ENCODE measurements at regions of chrX and their contacts with region 1.

Region 1: DNA sequence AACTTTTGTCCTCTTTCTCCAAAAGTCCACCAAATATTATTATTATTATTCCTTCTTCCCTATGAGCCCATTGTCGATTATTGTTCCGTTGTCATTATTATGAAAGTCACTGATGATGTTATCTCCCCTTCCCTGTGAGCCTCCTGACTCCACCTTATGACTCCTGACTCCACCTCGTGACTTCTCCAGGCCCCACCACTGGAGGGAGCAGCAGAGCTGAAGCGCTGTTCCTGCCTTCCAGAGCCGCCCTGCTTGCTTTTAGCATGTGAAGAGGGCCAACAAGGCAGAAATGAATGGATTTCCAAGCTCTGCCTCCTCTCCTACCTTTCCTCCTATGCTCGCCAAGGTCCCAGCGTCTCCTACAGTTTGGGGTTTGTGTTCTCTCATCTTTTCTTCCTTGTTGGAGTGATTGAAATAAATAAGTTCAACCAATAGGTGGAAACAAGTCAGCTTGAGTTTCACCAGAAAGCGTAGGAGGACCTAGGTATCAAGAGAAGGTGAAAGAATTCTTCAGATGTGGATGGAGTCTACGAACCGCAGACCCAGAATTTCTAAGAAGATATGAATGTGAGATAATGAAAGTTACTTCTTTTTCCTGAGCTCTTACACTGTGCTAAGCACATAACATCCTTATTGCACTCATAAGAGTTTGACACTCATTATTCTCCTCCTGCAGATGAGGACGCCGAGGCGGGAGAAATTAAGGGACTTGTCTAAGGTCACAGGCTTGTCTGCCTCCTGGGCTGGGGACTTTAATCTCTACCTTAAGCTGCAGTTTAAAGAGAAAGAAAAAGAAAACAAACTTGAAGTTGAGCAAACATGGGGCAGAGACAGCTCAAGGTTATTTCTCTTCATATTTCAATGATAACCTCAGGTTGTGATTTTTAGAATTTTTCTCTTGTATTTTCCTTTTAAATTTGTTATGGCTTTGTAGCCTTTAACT is 26.1 kb downstream of the IGSF1 start:
- DNase-seq: peak; percentile 77
- ATAC-seq: peak; percentile 96
- H3K4me3 Mint-ChIP-seq: no peak overlapping the region
- H3K27ac Mint-ChIP-seq: no peak overlapping the region
- H3K4me1 Mint-ChIP-seq: peaks cover 25% of the 10 kb centered on the region
- H3K27me3 Mint-ChIP-seq: no peaks in the 10 kb centered on the region
- CTCF ChIP-seq: peak; percentile 43

Region 2: DNA sequence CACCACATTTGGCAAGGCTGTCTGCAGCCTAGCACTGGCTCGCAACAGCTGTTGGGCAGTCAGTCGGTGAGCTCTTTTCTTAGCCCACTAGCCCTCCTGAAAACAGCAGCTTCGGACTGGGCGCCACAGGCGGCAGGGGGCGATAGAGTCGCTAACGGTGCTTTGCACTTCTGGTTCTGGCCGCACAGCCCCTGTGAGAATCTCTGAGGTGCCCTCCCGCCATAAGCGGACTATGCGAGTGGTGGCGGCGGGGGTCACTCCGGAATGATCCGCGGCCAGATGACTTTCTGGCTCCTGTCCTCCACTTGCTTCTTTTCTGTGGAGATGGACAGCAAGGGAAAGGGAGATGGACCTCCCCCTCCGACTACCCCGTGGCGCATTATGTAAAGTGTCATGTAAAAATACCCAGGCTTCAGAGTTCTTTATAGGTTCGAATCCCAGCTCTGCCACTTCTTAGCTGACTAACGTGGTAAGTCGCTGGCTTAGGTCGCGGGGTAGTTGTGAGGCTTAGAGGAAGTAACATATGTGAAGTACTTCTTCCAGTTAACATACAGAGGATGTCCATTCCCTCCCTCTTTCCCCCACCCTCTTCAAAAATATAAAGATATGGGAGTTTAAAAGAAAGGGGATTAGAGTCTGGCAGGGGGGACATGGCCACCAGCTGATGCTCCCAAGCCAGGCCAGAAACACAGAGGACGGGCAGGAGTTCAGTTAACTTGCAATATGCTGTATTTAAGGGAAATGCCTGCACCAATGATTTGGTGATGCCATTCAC is 193.9 kb before region 1 on chrX:
- CTCF ChIA-PET with region 1: interaction called, 11 read pairs
- POLR2A ChIA-PET with region 1: no interaction called
- DNase-seq: peak; percentile 83
- ATAC-seq: peak; percentile 60
- H3K4me3 Mint-ChIP-seq: no peak overlapping the region
- H3K27ac Mint-ChIP-seq: no peak overlapping the region
- H3K4me1 Mint-ChIP-seq: peaks cover 30% of the 10 kb centered on the region
- H3K27me3 Mint-ChIP-seq: peaks cover 3% of the 10 kb centered on the region
- CTCF ChIP-seq: peak; percentile 23; the same call in 1 of the 2 replicates

Region 3: DNA sequence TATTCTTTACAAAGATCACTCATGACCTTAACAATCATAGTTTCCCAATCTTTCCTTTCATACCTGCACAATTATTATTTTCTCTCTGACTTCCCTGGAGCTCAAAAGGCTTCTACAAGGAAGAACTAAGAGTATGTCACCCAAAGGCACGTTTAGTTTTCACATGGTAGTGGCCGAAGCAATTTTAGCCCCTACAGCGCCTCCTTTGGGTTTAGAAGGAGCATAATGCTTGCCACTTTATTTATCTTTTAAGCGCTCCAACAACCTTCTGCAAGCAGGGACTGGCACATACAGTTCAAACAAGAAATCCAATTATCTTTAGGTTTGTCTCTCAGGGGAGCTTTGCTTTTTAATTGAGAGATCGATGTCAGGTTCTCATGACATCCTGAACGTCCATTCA is 68.1 kb after region 1 on chrX:
- CTCF ChIA-PET with region 1: interaction called, 12 read pairs
- POLR2A ChIA-PET with region 1: no interaction called
- DNase-seq: no peak
- ATAC-seq: peak; percentile 39; the same call in 1 of the 2 replicates
- H3K4me3 Mint-ChIP-seq: no peak overlapping the region
- H3K27ac Mint-ChIP-seq: no peak overlapping the region
- H3K4me1 Mint-ChIP-seq: no peaks in the 10 kb centered on the region
- H3K27me3 Mint-ChIP-seq: no peaks in the 10 kb centered on the region
- CTCF ChIP-seq: no peak

Region 4: GRCh38 chrX:131366407-131366806 is 103.4 kb after region 1 on chrX:
- CTCF ChIA-PET with region 1: interaction called, 15 read pairs
- POLR2A ChIA-PET with region 1: no interaction called
- DNase-seq: no peak
- ATAC-seq: peak; percentile 38; the same call in 1 of the 2 replicates
- H3K4me3 Mint-ChIP-seq: no peak overlapping the region
- H3K27ac Mint-ChIP-seq: peak overlapping the region; percentile 66; the same call in 1 of the 2 replicates
- H3K4me1 Mint-ChIP-seq: peaks cover 54% of the 10 kb centered on the region
- H3K27me3 Mint-ChIP-seq: no peaks in the 10 kb centered on the region
- CTCF ChIP-seq: no peak

Region 5: GRCh38 chrX:131626681-131627296 is 363.8 kb after region 1 on chrX:
- CTCF ChIA-PET with region 1: interaction called, 11 read pairs
- POLR2A ChIA-PET with region 1: no interaction called
- DNase-seq: no peak
- ATAC-seq: no peak; the same call in 1 of the 2 replicates
- H3K4me3 Mint-ChIP-seq: no peak overlapping the region
- H3K27ac Mint-ChIP-seq: no peak overlapping the region
- H3K4me1 Mint-ChIP-seq: no peaks in the 10 kb centered on the region
- H3K27me3 Mint-ChIP-seq: peaks cover 6% of the 10 kb centered on the region
- CTCF ChIP-seq: no peak

Measured in WTC11 (cell line).